SK-N-SH (cell line): ENCODE measurements at regions of chr10 and their contacts with region 1.

Region 1: GRCh38 chr10:34655286-34656170 is 159.6 kb downstream of the PARD3 start:
- DNase-seq: peak; percentile 50
- H3K4me3 ChIP-seq: no peak overlapping the region
- H3K27ac ChIP-seq: no peak overlapping the region
- H3K4me1 ChIP-seq: peaks cover 0 to 12% of the 10 kb centered on the region in 2 experiments; a peak in 2 of 4 replicates
- H3K27me3 ChIP-seq: no peaks in the 10 kb centered on the region
- CTCF ChIP-seq: peak; percentile 85
- EP300 ChIP-seq: no peak
- RAD21 ChIP-seq: peak; percentile 70

Region 2: GRCh38 chr10:34575882-34576281 is 79.6 kb before region 1 on chr10:
- CTCF ChIA-PET with region 1: no interaction called
- POLR2A ChIA-PET with region 1: no interaction called
- DNase-seq: no peak
- H3K4me3 ChIP-seq: no peak overlapping the region
- H3K27ac ChIP-seq: peak overlapping the region in 1 of 2 experiments; percentile 13; a peak in 1 of 4 replicates
- H3K4me1 ChIP-seq: peaks cover 3 to 31% of the 10 kb centered on the region in 2 experiments
- H3K27me3 ChIP-seq: no peaks in the 10 kb centered on the region
- CTCF ChIP-seq: no peak
- EP300 ChIP-seq: no peak
- RAD21 ChIP-seq: no peak

Region 3: DNA sequence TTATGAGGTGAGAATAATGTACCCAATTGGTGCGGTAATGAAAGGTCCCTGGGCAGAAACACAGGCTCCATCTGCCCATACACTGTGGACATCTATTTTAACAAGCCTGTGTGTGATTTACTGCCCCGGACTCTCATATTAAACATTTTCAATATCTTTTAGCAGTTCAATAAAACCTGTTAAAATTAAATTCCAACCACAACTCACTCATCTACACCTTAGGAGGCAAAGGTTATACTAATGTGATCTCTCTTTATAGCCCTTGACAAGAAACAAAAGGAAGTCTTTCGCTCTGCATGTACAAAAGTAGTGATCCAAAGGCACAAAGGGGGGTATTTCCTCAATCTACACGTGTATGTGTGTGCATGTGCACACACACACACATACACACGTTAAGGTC is 26.4 kb before region 1 on chr10:
- CTCF ChIA-PET with region 1: no interaction called
- POLR2A ChIA-PET with region 1: no interaction called
- DNase-seq: no peak
- H3K4me3 ChIP-seq: no peak overlapping the region
- H3K27ac ChIP-seq: no peak overlapping the region
- H3K4me1 ChIP-seq: peaks cover 4 to 8% of the 10 kb centered on the region in 2 experiments; a peak in 2 of 4 replicates
- H3K27me3 ChIP-seq: no peaks in the 10 kb centered on the region
- CTCF ChIP-seq: no peak
- EP300 ChIP-seq: no peak
- RAD21 ChIP-seq: no peak

Region 4: DNA sequence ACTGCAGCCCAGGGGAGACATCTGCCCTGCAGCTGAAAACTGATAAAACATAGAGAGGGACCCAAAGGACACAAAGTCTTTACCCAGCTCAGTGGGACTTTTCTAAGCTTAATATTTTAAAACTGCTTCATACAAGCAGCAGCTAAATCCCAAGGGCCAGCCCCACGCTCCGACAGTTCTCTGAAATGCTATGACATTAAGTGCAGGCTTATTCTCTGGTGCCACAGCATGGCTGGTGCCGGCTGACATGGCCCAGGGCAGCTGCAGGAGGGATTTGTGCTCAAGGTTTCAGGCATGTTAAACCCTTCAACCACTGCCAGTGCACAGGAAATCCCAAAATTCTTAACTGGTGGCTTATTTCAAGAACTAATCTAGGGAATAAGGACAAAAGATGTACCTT is 11.3 kb before region 1 on chr10:
- CTCF ChIA-PET with region 1: interaction called, 30 read pairs
- POLR2A ChIA-PET with region 1: no interaction called
- DNase-seq: no peak
- H3K4me3 ChIP-seq: no peak overlapping the region
- H3K27ac ChIP-seq: no peak overlapping the region
- H3K4me1 ChIP-seq: peaks cover 0 to 2% of the 10 kb centered on the region in 2 experiments; a peak in 1 of 4 replicates
- H3K27me3 ChIP-seq: no peaks in the 10 kb centered on the region
- CTCF ChIP-seq: no peak
- EP300 ChIP-seq: no peak
- RAD21 ChIP-seq: no peak

Region 5: DNA sequence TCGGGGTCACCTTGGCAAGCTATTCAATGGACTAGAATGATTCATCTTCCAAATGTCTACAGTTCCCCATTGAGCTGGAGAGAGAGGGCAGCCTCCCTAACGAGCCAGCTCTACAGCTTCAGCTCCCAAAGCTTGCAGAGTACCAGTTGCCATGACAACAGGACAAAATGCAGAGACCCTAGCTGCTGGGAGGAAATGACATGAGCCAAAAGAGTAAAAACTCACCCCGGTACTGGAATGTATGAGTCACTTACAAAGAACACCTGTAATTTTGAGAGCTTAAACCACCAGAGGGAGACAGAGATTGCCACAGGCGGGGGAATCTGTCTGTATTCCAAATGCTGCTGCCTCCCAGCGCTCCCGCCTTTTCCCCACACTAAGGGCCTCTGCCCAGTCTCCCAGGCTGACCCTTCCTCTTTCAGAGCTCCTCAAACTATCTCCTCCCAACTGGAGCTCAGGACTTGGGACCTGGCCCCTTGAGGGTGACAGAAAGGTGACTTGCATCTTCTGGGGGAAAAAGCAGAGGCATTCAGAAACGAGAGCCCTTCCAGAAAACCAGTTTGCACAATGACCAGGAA is 339.1 kb after region 1 on chr10:
- CTCF ChIA-PET with region 1: interaction called, 11 read pairs
- POLR2A ChIA-PET with region 1: no interaction called
- DNase-seq: peak; percentile 72
- H3K4me3 ChIP-seq: no peak overlapping the region
- H3K27ac ChIP-seq: no peak overlapping the region
- H3K4me1 ChIP-seq: no peaks in the 10 kb centered on the region; a peak in 1 of 4 replicates
- H3K27me3 ChIP-seq: no peaks in the 10 kb centered on the region
- CTCF ChIP-seq: peak; percentile 73
- EP300 ChIP-seq: no peak
- RAD21 ChIP-seq: peak; percentile 79

Region 6: GRCh38 chr10:35027567-35027966 is 372.0 kb after region 1 on chr10:
- CTCF ChIA-PET with region 1: interaction called, 16 read pairs
- POLR2A ChIA-PET with region 1: no interaction called
- DNase-seq: peak; percentile 32
- H3K4me3 ChIP-seq: no peak overlapping the region
- H3K27ac ChIP-seq: peak overlapping the region in 1 of 2 experiments; percentile 31; a peak in 1 of 4 replicates
- H3K4me1 ChIP-seq: no peaks in the 10 kb centered on the region; a peak in 1 of 4 replicates
- H3K27me3 ChIP-seq: no peaks in the 10 kb centered on the region
- CTCF ChIP-seq: peak; percentile 73
- EP300 ChIP-seq: no peak
- RAD21 ChIP-seq: peak; percentile 49